ENCODE measurements at regions of chr19 and their contacts with region 1.

Region 1: GRCh38 chr19:35899547-35900214 is 659 bp downstream of the NFKBID start:
- DNase-seq: no peak
- ATAC-seq: peak; percentile 86
- H3K4me3 ChIP-seq: peak overlapping the region; percentile 88 to 90
- H3K27ac ChIP-seq: peak overlapping the region; percentile 90
- H3K4me1 ChIP-seq: peaks cover 23% of the 10 kb centered on the region
- H3K27me3 ChIP-seq: no peaks in the 10 kb centered on the region
- CTCF ChIP-seq: no peak

Region 2: DNA sequence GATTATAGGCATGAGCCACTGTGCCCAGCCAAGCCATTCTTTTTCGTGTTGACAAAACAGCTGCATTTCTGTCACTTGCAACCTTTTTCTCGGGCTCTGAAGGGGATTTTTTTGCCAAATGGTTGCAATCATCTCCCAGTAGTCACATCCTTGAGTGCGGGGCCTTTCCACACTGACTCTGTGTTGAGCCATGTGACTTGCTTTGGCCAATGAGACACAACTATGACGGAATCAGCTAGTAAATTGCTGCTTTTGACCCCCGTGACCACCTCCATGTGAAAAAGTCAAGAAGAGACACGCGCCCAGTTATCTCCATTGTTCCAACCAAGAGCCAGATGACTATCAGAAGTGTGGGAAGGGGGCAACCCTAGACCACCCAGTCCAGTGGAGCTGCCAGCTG is 65.7 kb before region 1 on chr19:
- CTCF ChIA-PET with region 1: no interaction called
- POLR2A ChIA-PET with region 1: no interaction called
- in situ Hi-C with region 1: loop called (anchors 10 kb)
- intact Hi-C with region 1: no loop called
- DNase-seq: no peak
- ATAC-seq: no peak
- H3K4me3 ChIP-seq: no peak overlapping the region
- H3K27ac ChIP-seq: no peak overlapping the region
- H3K4me1 ChIP-seq: no peaks in the 10 kb centered on the region
- H3K27me3 ChIP-seq: peaks cover 4% of the 10 kb centered on the region
- CTCF ChIP-seq: no peak

Region 3: DNA sequence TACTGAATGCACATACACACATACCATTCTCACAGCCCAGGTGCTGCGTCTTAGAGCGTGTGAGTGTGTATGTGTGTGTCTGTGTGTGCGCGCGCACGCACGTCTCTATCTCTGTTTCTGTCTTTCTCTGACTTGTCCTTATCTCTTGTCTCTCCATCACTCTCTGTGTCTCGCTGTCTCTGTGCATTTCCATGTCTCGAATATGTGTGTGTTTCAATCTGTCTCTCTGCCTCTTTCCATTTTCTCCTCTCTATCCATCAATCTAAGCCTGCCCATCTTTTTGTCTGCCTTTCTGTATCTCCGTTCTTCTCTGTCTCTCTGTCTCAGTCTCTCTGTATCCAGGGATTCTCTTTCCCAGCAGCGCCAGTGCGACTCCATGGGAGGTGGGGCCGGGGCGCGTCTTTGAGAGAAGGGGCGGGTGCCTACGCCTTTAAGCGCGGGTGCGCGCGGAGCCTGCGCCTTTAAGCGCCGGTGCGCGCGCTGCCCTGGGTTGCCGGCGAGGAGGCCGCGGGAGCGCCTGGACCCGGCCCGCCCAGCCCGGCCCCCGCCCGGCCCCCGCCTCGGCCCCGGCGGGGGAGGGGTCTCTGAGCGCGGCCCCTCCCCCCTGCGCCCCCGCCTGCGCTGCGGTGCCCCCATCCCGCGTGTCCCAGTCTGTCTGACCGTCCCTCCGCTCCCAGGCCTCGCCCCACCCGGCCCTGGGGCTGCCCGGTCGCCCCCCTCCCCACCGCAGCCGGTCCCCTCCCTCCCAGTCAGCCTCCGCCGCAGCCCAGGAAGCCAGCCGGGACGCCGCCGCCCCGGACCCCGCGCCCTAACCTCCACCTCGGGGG is 36.4 kb after region 1 on chr19 and contains the start of gene LRFN3:
- CTCF ChIA-PET with region 1: no interaction called
- POLR2A ChIA-PET with region 1: no interaction called
- in situ Hi-C with region 1: no loop called
- intact Hi-C with region 1: no loop called
- DNase-seq: no peak
- ATAC-seq: peak; percentile 73
- H3K4me3 ChIP-seq: peak within 1 kb of the TSS; percentile 67 to 71
- H3K27ac ChIP-seq: peak within 1 kb of the TSS; percentile 82
- H3K4me1 ChIP-seq: peaks cover 18% of the 10 kb centered on the region
- H3K27me3 ChIP-seq: no peaks in the 10 kb centered on the region
- CTCF ChIP-seq: no peak
- total RNA-seq, gene LRFN3: 16.7 TPM

Measured in Panc1 (cell line).